Left cardiac atrium (tissue), 4 donors: ENCODE measurements at regions of chr18 and their contacts with region 1.

Region 1: DNA sequence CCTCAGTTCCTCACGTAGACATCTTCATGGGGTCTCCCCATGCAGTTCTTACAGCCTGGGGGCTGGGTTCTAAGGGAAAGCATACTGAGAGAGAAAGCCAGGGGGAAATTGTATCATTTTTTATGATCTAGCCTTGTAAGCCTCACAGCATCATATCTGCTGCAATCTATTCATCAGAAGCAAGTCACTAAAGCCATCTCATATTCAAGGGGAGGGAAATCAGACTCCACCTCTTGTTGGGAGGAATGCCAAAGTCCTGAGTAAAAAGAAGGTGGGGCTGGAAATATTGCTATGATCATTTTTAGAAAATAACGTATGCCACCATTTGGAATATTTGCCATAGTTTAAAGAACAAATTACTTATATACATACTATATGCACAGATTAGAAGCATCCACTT is 304.6 kb downstream of the TXNL1 start:
- DNase-seq: no peak
- ATAC-seq: no peak

Region 2: DNA sequence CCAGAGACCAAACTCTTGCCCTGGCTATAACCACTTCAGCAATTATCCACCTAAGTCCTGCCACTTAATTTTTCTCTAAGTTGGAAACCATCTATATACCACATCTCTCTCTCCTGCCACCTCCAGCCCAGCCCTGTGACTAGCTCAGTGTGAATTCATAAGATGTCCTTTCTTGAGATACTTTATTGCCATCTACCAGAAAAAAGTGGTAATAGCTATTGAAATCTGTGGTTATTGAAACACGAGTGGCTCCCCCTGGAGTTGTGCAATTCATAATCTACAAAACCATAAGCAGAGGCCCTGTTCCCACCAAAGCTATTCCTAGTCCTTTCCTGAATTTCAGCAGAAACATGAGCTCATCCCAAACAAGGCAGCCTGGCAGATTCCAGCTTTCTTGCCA is 19.4 kb before region 1 on chr18:
- intact Hi-C with region 1: loop called in 1 of 2 experiments (anchors 2 kb)
- DNase-seq: no peak
- ATAC-seq: no peak